ENCODE measurements at regions of chr2 and their contacts with region 1.

Region 1: DNA sequence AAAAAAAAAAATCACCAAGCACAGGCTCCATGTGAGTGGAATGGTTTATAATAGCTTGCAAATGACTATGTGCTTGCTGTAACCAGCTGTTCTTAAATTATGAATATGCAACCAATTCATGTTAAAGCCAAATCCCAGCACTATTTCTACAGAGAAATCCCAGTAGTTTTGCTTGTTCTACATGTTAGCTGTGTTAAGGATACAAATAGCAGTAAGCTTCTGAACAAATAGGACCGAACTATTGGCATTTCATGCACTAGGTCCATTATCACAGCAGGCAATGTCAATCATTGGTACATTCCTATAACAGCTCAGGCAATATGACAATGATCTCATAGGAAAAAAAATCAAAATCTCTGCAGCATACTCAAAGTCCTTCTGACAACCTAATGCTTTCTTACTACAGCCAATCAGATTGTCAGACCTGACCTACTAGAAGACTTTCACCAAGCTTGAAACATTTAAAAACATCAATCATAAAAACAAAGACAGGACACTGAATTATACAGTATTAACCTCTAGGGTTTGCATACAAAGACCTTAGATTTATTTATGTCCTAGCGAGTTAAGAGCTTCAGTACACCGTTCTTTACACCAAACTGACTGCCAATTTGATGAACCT is 6.4 kb downstream of the BAZ2B start:
- DNase-seq: no peak
- H3K4me3 ChIP-seq: no peak overlapping the region
- H3K27ac ChIP-seq: no peak overlapping the region
- H3K4me1 ChIP-seq: peaks cover 16 to 39% (median 23%) of the 10 kb centered on the region in 4 experiments
- H3K27me3 ChIP-seq: no peaks in the 10 kb centered on the region

Region 2: DNA sequence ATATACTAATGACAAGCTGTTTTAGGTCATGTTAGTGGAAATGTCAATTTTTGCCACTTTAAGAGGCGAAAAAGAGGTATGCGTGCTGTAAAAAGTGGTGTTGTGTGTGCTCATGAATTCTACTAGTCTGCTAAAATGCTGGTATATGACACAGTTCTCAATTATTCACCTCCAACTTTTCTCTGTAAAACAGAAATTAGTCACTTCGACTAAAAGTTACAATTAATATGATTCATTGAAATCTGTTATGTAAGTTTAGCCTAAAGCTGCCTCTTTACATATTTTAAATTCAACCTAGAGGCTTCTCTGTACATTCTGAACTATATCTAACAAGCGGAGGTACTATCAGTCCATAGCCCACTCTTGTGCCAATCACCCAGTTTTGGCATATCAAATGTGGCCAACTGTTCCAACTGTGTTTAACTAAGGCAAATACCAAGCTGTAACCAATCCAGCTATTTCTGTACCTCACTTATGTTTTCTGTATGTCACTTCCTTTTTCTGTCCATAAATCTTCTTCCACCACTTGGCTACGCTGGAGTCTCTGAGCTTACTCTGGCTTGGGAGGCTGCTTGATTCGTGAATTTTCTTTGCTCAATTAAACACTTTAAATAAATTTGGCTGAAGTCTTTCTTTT is 14.4 kb before region 1 on chr2:
- CTCF ChIA-PET with region 1: interaction called, 10 read pairs
- POLR2A ChIA-PET with region 1: interaction called, 3 read pairs
- DNase-seq: peak; percentile 63 to 90 (median 80)
- H3K4me3 ChIP-seq: peak overlapping the region in 1 of 7 experiments; percentile 20
- H3K27ac ChIP-seq: peak overlapping the region in 1 of 2 experiments; percentile 36
- H3K4me1 ChIP-seq: peaks cover 4 to 17% (median 8%) of the 10 kb centered on the region in 4 experiments
- H3K27me3 ChIP-seq: no peaks in the 10 kb centered on the region

Measured in common myeloid progenitor, CD34-positive (primary cell).